Mammary epithelial cell (primary cell): ENCODE measurements at regions of chr5 and their contacts with region 1.

Region 1: DNA sequence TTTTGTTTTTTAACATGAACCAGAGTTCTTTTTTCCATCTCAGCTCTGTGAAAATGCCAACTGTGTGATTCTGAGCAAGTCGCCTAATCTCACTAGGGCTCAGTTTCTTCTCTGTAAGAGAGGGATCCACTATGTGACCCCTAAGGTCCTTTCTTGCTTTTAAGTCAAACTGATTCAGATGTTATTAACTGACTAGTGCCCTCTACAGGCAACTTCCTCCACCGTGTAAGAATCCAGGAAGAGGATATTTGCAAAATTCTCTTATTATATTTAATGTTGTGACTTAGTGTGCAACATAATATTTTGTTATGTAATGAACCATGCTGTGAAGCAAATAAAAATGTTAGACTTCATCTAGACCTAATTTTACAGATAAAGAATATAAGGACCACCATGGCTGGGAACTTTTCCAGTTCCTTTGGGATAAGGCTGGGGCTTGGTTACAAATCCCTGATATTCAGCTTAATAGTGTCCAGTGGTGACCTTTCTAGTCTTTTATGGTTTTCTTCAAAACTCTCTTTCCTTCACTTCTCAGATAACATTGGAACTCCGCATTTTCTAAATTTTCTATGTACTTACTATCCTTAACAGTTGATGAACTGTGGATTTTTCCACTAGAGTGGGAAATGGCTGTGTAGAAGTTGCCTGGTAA is 244.7 kb downstream of the PIK3R1 start:
- DNase-seq: peak; percentile 40
- H3K4me3 ChIP-seq: no peak overlapping the region
- H3K27ac ChIP-seq: no peak overlapping the region
- H3K4me1 ChIP-seq: peaks cover 19% of the 10 kb centered on the region
- H3K27me3 ChIP-seq: no peaks in the 10 kb centered on the region
- CTCF ChIP-seq: peak; percentile 68 to 74

Region 2: GRCh38 chr5:68433923-68434879 is 26.1 kb before region 1 on chr5:
- CTCF ChIA-PET with region 1: no interaction called
- dilution Hi-C with region 1: no loop called
- in situ Hi-C with region 1: no loop called
- intact Hi-C with region 1: loop called (anchors 1 kb)
- DNase-seq: peak; percentile 100
- H3K4me3 ChIP-seq: no peak overlapping the region
- H3K27ac ChIP-seq: peak overlapping the region; percentile 90
- H3K4me1 ChIP-seq: peaks cover 45% of the 10 kb centered on the region
- H3K27me3 ChIP-seq: no peaks in the 10 kb centered on the region
- CTCF ChIP-seq: no peak

Region 3: GRCh38 chr5:68519143-68519542 is 58.9 kb after region 1 on chr5:
- CTCF ChIA-PET with region 1: no interaction called
- dilution Hi-C with region 1: no loop called
- in situ Hi-C with region 1: no loop called
- intact Hi-C with region 1: no loop called
- DNase-seq: no peak
- H3K4me3 ChIP-seq: no peak overlapping the region
- H3K27ac ChIP-seq: no peak overlapping the region
- H3K4me1 ChIP-seq: no peaks in the 10 kb centered on the region
- H3K27me3 ChIP-seq: no peaks in the 10 kb centered on the region
- CTCF ChIP-seq: no peak

Region 4: GRCh38 chr5:68745448-68745847 is 285.2 kb after region 1 on chr5:
- CTCF ChIA-PET with region 1: no interaction called
- dilution Hi-C with region 1: no loop called
- in situ Hi-C with region 1: no loop called
- intact Hi-C with region 1: loop called (anchors 10 kb)
- DNase-seq: no peak
- H3K4me3 ChIP-seq: no peak overlapping the region
- H3K27ac ChIP-seq: no peak overlapping the region
- H3K4me1 ChIP-seq: no peaks in the 10 kb centered on the region
- H3K27me3 ChIP-seq: no peaks in the 10 kb centered on the region
- CTCF ChIP-seq: peak; percentile 8 to 28

Region 5: DNA sequence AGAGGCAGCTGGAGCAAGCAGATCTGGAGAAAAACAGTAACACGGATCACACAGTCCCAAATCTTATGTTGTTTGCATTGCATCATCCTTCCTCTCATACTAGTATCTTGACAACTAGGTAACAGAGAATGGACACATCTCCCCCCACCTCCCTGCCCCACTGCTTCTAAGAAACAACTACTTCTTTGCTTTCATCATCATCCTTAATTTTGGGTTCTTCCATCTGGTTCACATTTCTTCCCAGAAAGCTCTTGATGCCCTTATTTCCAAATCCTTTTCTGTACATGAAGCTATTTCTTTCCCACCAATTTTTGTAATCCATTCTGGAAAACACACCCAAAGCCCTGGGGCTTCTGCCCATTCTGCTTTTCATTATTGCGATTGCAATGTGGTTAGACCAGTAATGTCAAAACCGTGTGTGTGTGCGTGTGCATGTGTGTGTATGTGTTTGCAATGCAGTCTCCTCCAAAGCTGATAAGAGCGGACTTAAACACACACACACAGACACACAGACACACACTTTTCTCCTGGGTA is 378.8 kb after region 1 on chr5:
- CTCF ChIA-PET with region 1: no interaction called
- dilution Hi-C with region 1: no loop called
- in situ Hi-C with region 1: no loop called
- intact Hi-C with region 1: no loop called
- DNase-seq: no peak
- H3K4me3 ChIP-seq: no peak overlapping the region
- H3K27ac ChIP-seq: no peak overlapping the region
- H3K4me1 ChIP-seq: peaks cover 5% of the 10 kb centered on the region
- H3K27me3 ChIP-seq: no peaks in the 10 kb centered on the region
- CTCF ChIP-seq: no peak

Region 6: DNA sequence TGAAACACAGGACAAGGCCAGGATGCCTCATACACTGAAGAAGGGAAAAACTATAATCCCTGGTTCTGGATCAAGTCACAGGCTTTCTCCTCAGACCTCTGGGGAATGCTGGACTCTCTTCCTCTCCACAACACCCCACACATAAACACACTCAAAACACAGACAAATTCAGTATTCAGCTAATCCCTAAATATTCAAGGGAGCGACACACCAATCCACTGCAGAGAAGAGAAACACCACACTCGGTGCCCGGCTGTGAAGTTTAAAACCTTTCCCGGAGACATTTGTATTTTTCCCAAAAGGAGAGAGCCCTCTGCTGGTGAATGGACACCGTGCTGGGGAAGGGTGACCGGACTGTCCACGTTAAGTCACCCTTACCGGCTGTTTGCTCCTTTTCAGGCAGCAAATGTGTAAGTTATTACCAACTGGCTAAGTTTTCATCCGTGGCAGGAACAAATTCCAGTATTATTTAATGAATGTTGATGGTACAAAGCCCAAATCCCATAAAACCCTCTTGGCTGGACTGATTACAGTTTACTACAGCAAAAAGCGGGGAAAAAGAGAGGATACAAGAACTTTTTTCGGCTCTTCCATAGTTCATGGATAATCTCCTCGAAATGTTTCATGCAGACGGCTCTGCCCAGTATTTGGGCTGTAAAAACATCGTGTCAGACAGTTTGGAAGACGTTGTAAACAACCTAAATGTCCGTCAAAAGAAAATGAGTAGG is 502.6 kb after region 1 on chr5:
- CTCF ChIA-PET with region 1: no interaction called
- dilution Hi-C with region 1: no loop called
- in situ Hi-C with region 1: no loop called
- intact Hi-C with region 1: loop called (anchors 2 kb)
- DNase-seq: peak; percentile 48
- H3K4me3 ChIP-seq: no peak overlapping the region
- H3K27ac ChIP-seq: no peak overlapping the region
- H3K4me1 ChIP-seq: no peaks in the 10 kb centered on the region
- H3K27me3 ChIP-seq: no peaks in the 10 kb centered on the region
- CTCF ChIP-seq: peak; percentile 75 to 92

Region 7: GRCh38 chr5:68994645-68995044 is 534.4 kb after region 1 on chr5:
- CTCF ChIA-PET with region 1: no interaction called
- dilution Hi-C with region 1: no loop called
- in situ Hi-C with region 1: loop called in 1 of 2 experiments (anchors 25 kb)
- intact Hi-C with region 1: no loop called
- DNase-seq: no peak
- H3K4me3 ChIP-seq: no peak overlapping the region
- H3K27ac ChIP-seq: no peak overlapping the region
- H3K4me1 ChIP-seq: peaks cover 15% of the 10 kb centered on the region
- H3K27me3 ChIP-seq: no peaks in the 10 kb centered on the region
- CTCF ChIP-seq: no peak

Region 8: DNA sequence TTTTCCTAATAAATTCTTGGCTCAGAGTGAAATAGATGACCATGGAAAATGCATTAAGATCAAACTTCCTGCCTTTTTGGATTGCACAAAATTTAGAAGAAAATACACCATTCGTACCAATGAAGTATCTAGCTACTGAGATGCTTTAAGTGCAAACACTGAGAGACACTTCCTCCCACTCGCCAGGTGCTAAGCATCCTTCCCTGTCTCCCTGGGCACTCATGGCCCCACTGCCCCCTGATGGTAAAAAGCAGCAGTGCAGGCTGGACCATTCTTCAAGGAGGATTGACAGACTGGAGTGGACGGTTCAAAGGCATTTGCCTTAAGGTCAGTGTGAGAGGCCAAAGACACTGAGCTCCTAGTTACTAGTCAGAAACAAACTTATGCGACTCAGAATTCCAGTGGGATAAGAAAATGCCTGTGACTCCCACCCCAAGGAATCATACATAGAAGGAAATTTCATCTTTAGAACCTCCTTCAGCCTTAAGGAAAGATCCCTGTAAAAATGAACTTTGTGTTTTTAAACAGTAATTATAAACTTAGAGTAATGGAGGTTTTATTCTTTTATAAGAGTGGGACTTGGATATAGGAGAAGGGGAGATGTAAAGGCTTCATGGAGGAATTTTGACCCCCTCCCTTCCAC is 547.6 kb after region 1 on chr5:
- CTCF ChIA-PET with region 1: no interaction called
- dilution Hi-C with region 1: no loop called
- in situ Hi-C with region 1: no loop called
- intact Hi-C with region 1: loop called (anchors 5 kb)
- DNase-seq: peak; percentile 58
- H3K4me3 ChIP-seq: no peak overlapping the region
- H3K27ac ChIP-seq: no peak overlapping the region
- H3K4me1 ChIP-seq: no peaks in the 10 kb centered on the region
- H3K27me3 ChIP-seq: no peaks in the 10 kb centered on the region
- CTCF ChIP-seq: peak; percentile 99 to 100